Dorsolateral prefrontal cortex (tissue), 120 donors: ENCODE measurements at regions of chr13 and their contacts with region 1.

Region 1: GRCh38 chr13:29595380-29596063 is at the start of gene SLC7A1:
- DNase-seq: peak; percentile 50 to 86 (median 65)
- H3K4me3 ChIP-seq: peak within 1 kb of the TSS; percentile 62 to 94 (median 84)
- H3K27ac ChIP-seq: peak within 1 kb of the TSS in 57 of 59 donors; percentile 8 to 92 (median 77)
- H3K27me3 ChIP-seq: no peaks in the 10 kb centered on the region
- CTCF ChIP-seq: peak in 6 of 56 donors; percentile 6 to 19 (median 10)
- total RNA-seq, gene SLC7A1: 36.0 to 104 (median 59.3) TPM

Region 2: DNA sequence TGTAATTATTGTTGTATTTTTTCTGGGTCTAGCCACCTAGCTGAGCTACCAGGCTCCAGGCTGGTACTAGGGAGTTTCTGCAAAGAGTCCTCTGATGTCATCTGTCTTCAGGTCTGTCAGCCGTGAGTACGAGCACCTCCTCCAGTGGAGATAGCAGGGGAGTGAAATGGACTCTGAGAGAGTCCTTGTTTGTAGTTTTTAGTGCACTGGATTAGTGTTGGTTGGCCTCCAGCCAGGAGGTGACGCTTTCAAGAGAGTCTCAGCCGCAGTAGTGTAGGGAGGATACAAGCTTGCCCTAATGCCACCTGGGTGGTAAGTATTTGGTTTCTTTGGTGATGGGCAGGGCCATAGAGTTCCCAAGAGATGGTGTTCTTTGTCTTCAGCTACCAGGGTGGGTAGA is 384.8 kb before region 1 on chr13:
- intact Hi-C with region 1: no loop called
- DNase-seq: no peak
- H3K4me3 ChIP-seq: no peak overlapping the region
- H3K27ac ChIP-seq: no peak overlapping the region
- H3K27me3 ChIP-seq: no peaks in the 10 kb centered on the region
- CTCF ChIP-seq: no peak

Region 3: DNA sequence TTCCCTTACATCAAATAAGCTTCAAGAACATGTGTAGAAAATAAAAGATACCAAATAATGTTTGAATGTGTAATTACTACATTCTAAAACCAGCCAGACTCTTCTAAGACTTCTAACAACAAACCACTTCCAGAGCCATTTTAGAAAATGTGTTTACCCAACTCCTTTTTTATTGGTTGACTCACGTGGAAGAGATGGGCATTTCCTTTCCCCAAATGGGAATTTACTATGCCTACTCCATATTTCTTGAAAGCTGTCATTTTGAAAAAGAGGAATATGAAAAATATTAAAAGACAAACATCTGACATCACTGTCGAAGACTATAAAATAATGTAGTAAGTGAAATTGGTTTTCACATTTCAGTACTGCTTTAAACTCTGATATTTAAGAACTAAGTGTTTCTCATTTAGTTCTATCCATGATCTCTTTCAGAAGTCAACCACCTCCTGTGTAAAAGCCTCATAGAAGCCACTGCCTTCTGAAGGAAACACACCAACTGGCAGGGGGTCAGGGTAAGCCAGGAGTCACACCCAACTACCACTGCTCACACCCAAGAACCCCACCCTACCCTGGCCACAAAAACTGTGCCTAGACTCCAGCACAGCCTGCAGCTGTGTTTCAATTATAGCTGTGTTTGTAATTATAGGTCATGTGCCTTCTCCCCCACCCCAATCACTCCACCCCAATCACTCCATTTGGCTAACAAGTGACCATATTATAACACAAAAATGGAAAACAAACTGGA is 168.1 kb after region 1 on chr13:
- intact Hi-C with region 1: loop called in 1 of 2 experiments (anchors 10 kb)
- DNase-seq: no peak
- H3K4me3 ChIP-seq: no peak overlapping the region
- H3K27ac ChIP-seq: peak overlapping the region in 5 of 59 donors; percentile 4 to 85 (median 11)
- H3K27me3 ChIP-seq: no peaks in the 10 kb centered on the region
- CTCF ChIP-seq: no peak

Region 4: DNA sequence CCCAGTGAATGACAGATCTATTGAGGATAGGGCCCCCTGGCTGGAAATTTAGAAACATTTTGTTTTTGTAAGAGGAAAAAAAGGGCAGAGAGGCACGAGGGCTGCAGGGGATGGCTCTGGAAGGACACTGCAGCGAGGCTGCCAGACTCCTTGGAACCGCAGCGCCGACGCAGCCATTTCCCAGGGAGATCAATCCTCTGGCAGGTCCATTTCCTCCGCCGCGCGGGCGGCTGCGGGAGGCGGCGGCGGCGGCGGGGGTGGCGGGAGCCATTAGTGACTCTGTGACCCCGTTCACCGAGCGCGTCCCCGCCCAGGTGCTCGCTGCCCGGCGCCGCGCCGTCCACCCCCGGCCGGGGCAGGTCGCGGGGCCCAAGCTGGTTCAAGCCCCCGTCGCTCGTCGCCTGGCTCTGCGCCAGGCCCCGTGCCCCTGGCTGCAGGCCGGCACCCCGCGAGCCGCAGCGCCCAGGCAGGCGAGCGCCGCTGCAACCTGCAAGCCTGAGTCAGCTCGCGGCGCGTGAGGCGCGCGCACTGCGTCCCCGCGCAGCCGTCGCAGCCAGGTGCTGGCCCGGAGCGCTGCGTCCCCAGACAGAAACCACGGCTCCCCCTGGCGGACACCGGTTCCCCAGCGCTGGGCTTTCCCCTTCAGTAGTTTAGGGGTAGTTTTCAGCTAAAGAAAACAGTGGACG is 519.2 kb after region 1 on chr13:
- intact Hi-C with region 1: loop called (anchors 10 kb)
- DNase-seq: peak; percentile 85 to 92 (median 90)
- H3K4me3 ChIP-seq: peak overlapping the region; percentile 19 to 84 (median 64)
- H3K27ac ChIP-seq: peak overlapping the region in 57 of 59 donors; percentile 30 to 95 (median 79)
- H3K27me3 ChIP-seq: no peaks in the 10 kb centered on the region
- CTCF ChIP-seq: peak; percentile 66 to 98 (median 92)